ENCODE measurements at regions of chr3 and their contacts with region 1.

Region 1: DNA sequence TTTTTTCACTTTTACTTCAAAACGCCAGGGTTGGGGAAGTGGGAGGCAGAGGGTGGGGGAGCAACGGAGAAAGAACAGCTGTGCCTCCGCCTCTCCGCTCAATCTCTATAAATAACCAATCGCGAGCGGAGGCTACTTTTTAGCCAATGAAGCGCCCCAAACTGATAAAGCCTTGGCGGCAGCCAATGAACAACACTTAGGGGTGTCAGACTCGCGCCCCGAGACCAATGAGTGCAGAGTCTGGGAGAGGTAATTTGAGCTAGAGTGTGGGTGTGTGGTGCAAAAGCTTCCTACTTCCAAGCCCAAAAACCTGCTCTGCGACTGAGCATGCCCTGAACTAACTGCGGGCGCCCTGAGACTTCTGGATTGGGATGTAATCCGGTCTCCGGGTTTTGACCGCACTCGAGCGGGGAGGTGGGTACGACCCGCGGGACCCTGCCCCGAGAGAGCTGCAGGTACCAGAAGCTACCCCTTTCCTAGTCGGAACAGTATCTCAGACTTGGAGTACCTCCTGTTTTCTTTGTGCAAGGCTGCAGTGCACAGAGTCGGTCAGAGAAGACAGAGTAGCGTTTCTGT is 800 bp upstream of the RAP2B start:
- DNase-seq: peak; percentile 97 to 99
- H3K4me3 ChIP-seq: peak overlapping the region; percentile 97
- H3K27ac ChIP-seq: peak overlapping the region; percentile 93
- H3K4me1 ChIP-seq: peaks cover 42% of the 10 kb centered on the region
- H3K27me3 ChIP-seq: no peaks in the 10 kb centered on the region
- CTCF ChIP-seq: no peak

Region 2: GRCh38 chr3:152969561-152970240 is 191.5 kb before region 1 on chr3:
- CTCF ChIA-PET with region 1: no interaction called
- POLR2A ChIA-PET with region 1: no interaction called
- intact Hi-C with region 1: loop called (anchors 5 kb)
- DNase-seq: peak; percentile 24 to 91
- H3K4me3 ChIP-seq: no peak overlapping the region
- H3K27ac ChIP-seq: peak overlapping the region; percentile 23
- H3K4me1 ChIP-seq: peaks cover 48% of the 10 kb centered on the region
- H3K27me3 ChIP-seq: no peaks in the 10 kb centered on the region
- CTCF ChIP-seq: no peak

Region 3: GRCh38 chr3:153072856-153073255 is 88.4 kb before region 1 on chr3:
- CTCF ChIA-PET with region 1: no interaction called
- POLR2A ChIA-PET with region 1: interaction called, 9 read pairs
- intact Hi-C with region 1: loop called (anchors 1 kb)
- DNase-seq: peak; percentile 61 to 69
- H3K4me3 ChIP-seq: no peak overlapping the region
- H3K27ac ChIP-seq: no peak overlapping the region
- H3K4me1 ChIP-seq: peaks cover 18% of the 10 kb centered on the region; the same call in 1 of the 2 replicates
- H3K27me3 ChIP-seq: no peaks in the 10 kb centered on the region
- CTCF ChIP-seq: no peak

Region 4: GRCh38 chr3:153284282-153284938 is 123.2 kb after region 1 on chr3:
- CTCF ChIA-PET with region 1: no interaction called
- POLR2A ChIA-PET with region 1: no interaction called
- intact Hi-C with region 1: loop called (anchors 2 kb)
- DNase-seq: peak; percentile 62 to 66
- H3K4me3 ChIP-seq: no peak overlapping the region
- H3K27ac ChIP-seq: peak overlapping the region; percentile 38
- H3K4me1 ChIP-seq: peaks cover 22% of the 10 kb centered on the region
- H3K27me3 ChIP-seq: no peaks in the 10 kb centered on the region
- CTCF ChIP-seq: no peak

Region 5: DNA sequence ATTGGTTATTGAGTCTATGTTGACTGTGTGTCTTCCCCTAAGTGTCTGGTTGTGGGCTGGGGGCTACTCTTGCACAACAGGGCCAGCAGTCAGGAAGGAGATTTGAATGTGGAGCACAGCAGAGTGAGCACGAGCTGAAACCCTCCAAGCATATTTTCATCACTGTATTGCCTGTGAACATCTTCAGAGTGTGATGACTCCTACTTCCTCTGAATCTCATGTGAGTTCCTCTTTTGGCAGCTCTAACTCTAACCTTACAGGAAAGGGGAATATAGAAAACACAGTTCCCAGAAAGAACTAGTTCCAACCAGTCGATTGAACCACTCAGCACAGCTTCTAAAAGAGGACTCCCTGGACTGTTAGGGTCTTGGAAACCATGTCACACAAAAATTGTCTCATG is 212.4 kb after region 1 on chr3:
- CTCF ChIA-PET with region 1: no interaction called
- POLR2A ChIA-PET with region 1: no interaction called
- intact Hi-C with region 1: no loop called
- DNase-seq: no peak
- H3K4me3 ChIP-seq: no peak overlapping the region
- H3K27ac ChIP-seq: no peak overlapping the region
- H3K4me1 ChIP-seq: no peaks in the 10 kb centered on the region
- H3K27me3 ChIP-seq: no peaks in the 10 kb centered on the region
- CTCF ChIP-seq: no peak

Region 6: DNA sequence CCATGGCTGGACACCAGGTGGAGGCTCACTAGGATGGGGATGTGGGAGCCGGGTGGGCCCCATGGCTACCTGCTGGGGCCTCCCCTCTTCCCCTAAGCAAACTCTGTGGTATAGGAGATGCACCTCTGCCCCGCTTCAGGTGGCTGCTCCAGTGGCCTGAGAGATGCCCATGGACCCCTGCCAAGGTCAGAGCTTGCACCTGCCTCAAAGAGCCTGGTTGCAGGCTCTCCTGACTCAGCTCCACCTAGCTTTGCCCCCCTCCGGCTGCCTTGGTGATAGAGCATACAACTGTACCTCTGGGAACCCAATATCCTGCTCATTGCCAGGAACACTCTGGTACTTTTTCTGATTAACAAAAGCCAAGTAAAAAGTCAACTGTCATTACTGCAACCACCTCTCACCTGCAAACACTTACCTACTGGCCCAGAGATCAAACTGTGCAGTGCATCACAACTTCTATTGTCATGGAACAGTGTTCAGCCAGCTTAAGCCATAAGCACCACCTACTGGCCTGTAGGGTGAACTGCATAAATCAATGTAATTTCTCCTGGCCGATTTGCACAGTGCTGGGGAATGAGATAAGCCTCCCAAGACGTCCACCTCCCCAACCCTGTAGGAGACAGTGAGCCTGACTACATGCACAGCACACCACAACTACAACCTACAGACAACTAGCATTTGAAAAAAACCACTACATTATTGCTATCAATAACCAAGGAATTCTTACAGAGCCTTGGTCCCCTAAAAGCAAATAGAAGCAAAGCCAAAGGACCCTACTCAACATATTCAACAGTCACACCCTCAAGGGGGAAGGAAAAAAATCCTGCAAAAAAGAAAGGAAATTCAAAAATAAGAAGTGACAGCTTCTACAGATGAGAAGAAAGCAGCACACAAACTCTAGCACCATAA is 607.6 kb after region 1 on chr3:
- CTCF ChIA-PET with region 1: interaction called, 3 read pairs
- POLR2A ChIA-PET with region 1: interaction called, 6 read pairs
- intact Hi-C with region 1: loop called (anchors 2 kb)
- DNase-seq: peak; percentile 38 to 50
- H3K4me3 ChIP-seq: no peak overlapping the region
- H3K27ac ChIP-seq: no peak overlapping the region
- H3K4me1 ChIP-seq: 0 out of 2 replicates have a peak, but pooled peaks cover 9% of the 10 kb centered on the region
- H3K27me3 ChIP-seq: no peaks in the 10 kb centered on the region
- CTCF ChIP-seq: peak; percentile 93

Region 7: GRCh38 chr3:153970741-153971347 is 809.6 kb after region 1 on chr3:
- CTCF ChIA-PET with region 1: interaction called, 3 read pairs
- POLR2A ChIA-PET with region 1: no interaction called
- intact Hi-C with region 1: loop called (anchors 10 kb)
- DNase-seq: no peak
- H3K4me3 ChIP-seq: no peak overlapping the region
- H3K27ac ChIP-seq: no peak overlapping the region
- H3K4me1 ChIP-seq: no peaks in the 10 kb centered on the region
- H3K27me3 ChIP-seq: no peaks in the 10 kb centered on the region
- CTCF ChIP-seq: peak; percentile 69